MCF 10A (cell line): ENCODE measurements at regions of chr4 and their contacts with region 1.

Region 1: DNA sequence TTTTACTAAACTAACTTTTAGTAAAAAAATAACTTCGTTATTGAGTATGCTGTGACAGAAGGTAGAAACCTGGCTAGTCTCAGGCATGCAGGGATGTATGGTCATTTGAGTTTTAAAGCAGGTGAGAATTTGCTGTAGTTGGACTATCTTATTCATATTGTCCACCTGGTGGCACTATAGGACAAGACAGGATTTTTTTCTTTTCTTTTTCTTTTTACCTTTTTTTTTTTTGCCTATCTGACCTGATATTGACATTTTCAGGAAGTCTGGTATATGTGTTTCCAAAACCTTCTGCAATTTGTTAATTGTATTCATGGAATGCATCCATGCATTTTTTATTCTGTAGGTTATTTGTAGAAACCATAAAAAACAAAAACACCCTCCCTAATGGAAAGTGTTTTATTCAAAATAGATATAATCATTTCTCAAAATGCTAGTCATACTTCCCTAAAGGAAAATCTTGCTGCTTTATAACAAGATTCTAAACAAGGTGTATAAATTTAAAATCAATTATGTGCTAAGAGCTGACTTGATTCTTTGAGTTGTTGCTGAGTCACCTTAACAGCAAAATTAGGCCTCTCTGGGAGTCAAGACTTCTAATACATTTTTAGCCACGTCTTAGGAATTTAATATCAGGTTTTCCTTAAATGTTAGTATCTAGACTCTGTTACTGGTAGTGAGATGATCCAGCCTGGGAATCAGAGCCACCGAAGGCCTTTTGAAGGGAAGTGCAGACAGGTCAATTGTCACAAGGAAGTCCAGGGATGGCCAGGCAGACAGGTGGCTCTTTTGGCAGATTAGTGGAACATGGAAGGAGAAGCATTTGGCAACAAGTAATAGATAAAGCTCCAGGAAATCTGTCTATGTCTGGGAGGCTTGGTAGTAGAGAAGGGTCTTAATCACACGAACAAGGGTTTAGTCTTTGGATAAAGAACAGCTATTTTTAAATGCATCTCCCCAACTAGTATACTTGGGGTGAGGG is 201.3 kb upstream of the GNPDA2 start:
- DNase-seq: peak; percentile 66
- H3K4me3 Mint-ChIP-seq: no peak overlapping the region
- H3K27ac Mint-ChIP-seq: no peak overlapping the region
- H3K4me1 Mint-ChIP-seq: no peaks in the 10 kb centered on the region
- H3K27me3 Mint-ChIP-seq: no peaks in the 10 kb centered on the region
- CTCF ChIP-seq: peak; percentile 60

Region 2: DNA sequence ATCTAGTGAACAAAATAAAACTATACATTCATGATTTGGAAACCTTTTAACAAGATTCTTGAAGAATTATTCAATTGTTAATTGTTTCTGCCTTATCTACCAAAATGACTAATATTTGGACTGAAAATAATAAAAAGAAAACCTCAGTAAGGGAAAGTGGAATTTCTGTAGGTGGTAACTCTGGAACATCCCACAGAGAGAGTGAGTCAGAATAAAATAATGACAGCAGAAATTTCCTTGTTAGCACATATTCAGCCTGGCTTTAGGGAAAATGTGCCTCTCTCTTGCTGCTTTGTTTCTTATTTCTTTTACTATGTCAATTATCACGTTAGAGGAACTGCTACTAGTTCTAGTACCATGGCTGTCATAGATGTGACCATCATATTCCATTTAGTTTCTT is 220.2 kb after region 1 on chr4:
- CTCF ChIA-PET with region 1: no interaction called
- POLR2A ChIA-PET with region 1: no interaction called
- intact Hi-C with region 1: no loop called
- DNase-seq: peak; percentile 43
- H3K4me3 Mint-ChIP-seq: peak overlapping the region; percentile 1
- H3K27ac Mint-ChIP-seq: peak overlapping the region; percentile 17
- H3K4me1 Mint-ChIP-seq: peaks cover 20% of the 10 kb centered on the region
- H3K27me3 Mint-ChIP-seq: no peaks in the 10 kb centered on the region
- CTCF ChIP-seq: no peak

Region 3: DNA sequence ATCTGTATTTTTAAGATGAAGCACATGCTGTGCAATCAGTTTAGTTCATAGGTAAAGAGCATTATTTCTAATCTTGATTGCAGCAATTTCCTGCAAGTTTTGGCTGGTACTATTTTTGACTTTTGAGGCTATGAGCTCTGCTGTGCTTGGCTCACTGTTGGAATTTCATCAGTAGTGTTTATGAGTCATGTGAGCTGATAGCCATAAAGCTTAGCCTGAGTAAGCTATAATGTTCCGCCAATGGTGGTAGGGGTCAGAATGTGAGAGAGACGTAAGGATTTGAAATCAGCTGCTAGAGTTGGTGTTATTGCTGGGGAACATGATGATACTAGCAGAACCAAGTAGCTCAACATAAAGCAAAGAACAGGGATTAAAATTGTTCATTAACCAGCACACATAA is 389.6 kb after region 1 on chr4:
- CTCF ChIA-PET with region 1: interaction called, 4 read pairs
- POLR2A ChIA-PET with region 1: no interaction called
- intact Hi-C with region 1: loop called (anchors 5 kb)
- DNase-seq: peak; percentile 86
- H3K4me3 Mint-ChIP-seq: no peak overlapping the region
- H3K27ac Mint-ChIP-seq: peak overlapping the region; percentile 28
- H3K4me1 Mint-ChIP-seq: peaks cover 28% of the 10 kb centered on the region
- H3K27me3 Mint-ChIP-seq: no peaks in the 10 kb centered on the region
- CTCF ChIP-seq: no peak

Region 4: DNA sequence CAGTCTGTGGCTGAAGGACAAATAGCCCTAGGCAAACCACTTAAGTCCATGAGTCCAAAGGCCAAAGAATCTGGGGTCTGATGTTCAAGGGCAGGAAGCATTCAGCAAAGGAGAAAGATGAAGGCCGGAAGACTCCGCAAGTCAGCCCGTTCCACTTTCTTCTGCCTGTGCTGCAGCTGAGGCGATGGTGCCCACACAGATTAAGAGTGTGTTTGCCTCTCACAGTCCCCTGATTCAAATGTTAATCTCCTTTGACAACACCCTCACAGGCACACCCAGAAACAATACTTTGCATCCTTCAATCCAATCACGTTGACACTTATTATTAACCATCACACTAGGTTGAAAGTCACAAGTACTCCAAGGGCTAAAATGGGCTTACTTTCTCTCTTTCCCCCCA is 404.1 kb after region 1 on chr4:
- CTCF ChIA-PET with region 1: interaction called, 8 read pairs
- POLR2A ChIA-PET with region 1: no interaction called
- intact Hi-C with region 1: loop called (anchors 5 kb)
- DNase-seq: no peak
- H3K4me3 Mint-ChIP-seq: no peak overlapping the region
- H3K27ac Mint-ChIP-seq: no peak overlapping the region
- H3K4me1 Mint-ChIP-seq: peaks cover 12% of the 10 kb centered on the region
- H3K27me3 Mint-ChIP-seq: no peaks in the 10 kb centered on the region
- CTCF ChIP-seq: no peak

Region 5: GRCh38 chr4:45442466-45442865 is 514.8 kb after region 1 on chr4:
- CTCF ChIA-PET with region 1: interaction called, 78 read pairs
- POLR2A ChIA-PET with region 1: interaction called, 4 read pairs
- intact Hi-C with region 1: loop called (anchors 1 kb)
- DNase-seq: peak; percentile 63
- H3K4me3 Mint-ChIP-seq: no peak overlapping the region
- H3K27ac Mint-ChIP-seq: no peak overlapping the region
- H3K4me1 Mint-ChIP-seq: peaks cover 7% of the 10 kb centered on the region
- H3K27me3 Mint-ChIP-seq: no peaks in the 10 kb centered on the region
- CTCF ChIP-seq: peak; percentile 44